Heart right ventricle (tissue), 16 donors: ENCODE measurements at regions of chr3 and their contacts with region 1.

Region 1: GRCh38 chr3:120095226-120095978 is 1.2 kb upstream of the GSK3B start:
- DNase-seq: peak; percentile 88 to 91
- ATAC-seq: peak; percentile 56 to 81 (median 73)
- H3K4me3 ChIP-seq: peak overlapping the region; percentile 74 to 95 (median 86)
- H3K27ac ChIP-seq: peak overlapping the region; percentile 98 to 100 (median 99)
- H3K4me1 ChIP-seq: peaks cover 0 to 31% (median 26%) of the 10 kb centered on the region in 9 donors
- H3K27me3 ChIP-seq: no peaks in the 10 kb centered on the region
- CTCF ChIP-seq: no peak

Region 2: DNA sequence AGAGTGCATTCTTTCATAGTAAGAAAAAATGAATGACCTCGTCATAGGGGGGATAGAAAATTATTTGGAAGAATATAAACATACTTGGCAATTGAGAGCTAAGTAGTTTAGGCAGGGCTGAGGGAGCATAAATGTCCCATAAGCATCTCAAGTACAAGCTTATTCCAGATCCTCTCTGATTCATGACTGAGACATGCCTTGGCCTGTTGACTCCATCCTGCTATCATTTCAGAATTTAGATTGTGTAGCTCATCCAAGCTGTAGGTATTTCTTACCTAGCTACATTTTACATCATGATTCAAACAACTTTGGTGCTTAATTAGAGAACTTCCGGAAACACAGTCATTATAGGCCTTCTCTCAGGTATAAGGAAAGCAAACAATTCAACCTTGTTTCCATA is 614.3 kb before region 1 on chr3:
- intact Hi-C with region 1: no loop called
- DNase-seq: no peak
- ATAC-seq: no peak
- H3K4me3 ChIP-seq: no peak overlapping the region
- H3K27ac ChIP-seq: no peak overlapping the region
- H3K4me1 ChIP-seq: no peaks in the 10 kb centered on the region
- H3K27me3 ChIP-seq: no peaks in the 10 kb centered on the region
- CTCF ChIP-seq: no peak

Region 3: GRCh38 chr3:119669906-119670570 is 425.4 kb before region 1 on chr3:
- intact Hi-C with region 1: no loop called
- DNase-seq: no peak
- ATAC-seq: peak in 1 of 8 donors; percentile 8
- H3K4me3 ChIP-seq: no peak overlapping the region
- H3K27ac ChIP-seq: peak overlapping the region in 9 of 10 donors; percentile 33 to 98 (median 58)
- H3K4me1 ChIP-seq: peaks cover 3 to 57% (median 35%) of the 10 kb centered on the region in 9 donors
- H3K27me3 ChIP-seq: no peaks in the 10 kb centered on the region
- CTCF ChIP-seq: no peak

Region 4: DNA sequence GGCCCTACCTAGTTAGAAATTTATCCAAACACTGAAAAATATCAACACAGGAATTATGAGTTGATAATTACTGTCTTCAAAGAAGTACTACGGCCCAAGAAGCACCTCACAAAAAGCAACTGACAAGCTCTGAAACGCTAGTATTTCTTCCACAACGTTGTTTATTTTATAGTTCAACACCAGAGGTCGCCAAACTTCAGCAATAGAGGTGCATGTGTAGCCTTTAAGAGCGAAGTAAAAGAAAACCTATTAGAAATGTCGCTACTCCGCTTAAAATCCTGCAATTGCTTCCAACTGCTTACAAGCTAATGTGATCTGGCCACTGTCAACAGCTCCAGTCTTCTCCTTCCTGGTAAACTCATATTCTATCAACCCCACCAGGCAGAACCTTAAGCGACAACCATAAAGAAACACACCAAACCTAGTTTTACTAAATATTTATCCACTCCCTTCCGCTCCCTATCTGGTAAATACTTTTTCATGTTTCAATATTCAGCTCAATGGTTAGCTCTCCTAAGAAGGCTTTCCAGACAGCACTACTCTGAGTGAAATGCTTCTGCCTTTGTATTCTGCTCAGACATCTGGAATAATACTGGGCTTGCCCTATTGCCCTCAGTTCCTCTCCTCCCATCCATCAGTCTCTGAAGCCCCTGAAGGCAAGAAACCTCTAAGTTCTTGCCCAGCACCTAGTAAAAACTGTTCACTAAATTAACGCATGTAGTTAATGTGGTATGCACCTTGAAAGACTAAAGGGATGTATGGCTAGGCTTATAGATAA is 203.3 kb before region 1 on chr3:
- intact Hi-C with region 1: loop called in 9 of 10 experiments (anchors 2 to 10 kb)
- DNase-seq: peak in 1 of 2 donors; percentile 60
- ATAC-seq: peak; percentile 61 to 89 (median 84)
- H3K4me3 ChIP-seq: peak overlapping the region in 1 of 10 donors; percentile 6
- H3K27ac ChIP-seq: peak overlapping the region in 1 of 10 donors; percentile 11
- H3K4me1 ChIP-seq: peaks cover 0 to 12% (median 9%) of the 10 kb centered on the region in 9 donors
- H3K27me3 ChIP-seq: no peaks in the 10 kb centered on the region
- CTCF ChIP-seq: peak; percentile 45 to 89 (median 75)

Region 5: GRCh38 chr3:119912220-119912619 is 183.2 kb before region 1 on chr3:
- intact Hi-C with region 1: loop called in 1 of 10 experiments (anchors 5 kb)
- DNase-seq: no peak
- ATAC-seq: no peak
- H3K4me3 ChIP-seq: no peak overlapping the region
- H3K27ac ChIP-seq: no peak overlapping the region
- H3K4me1 ChIP-seq: peaks cover 0 to 34% (median 13%) of the 10 kb centered on the region in 9 donors
- H3K27me3 ChIP-seq: no peaks in the 10 kb centered on the region
- CTCF ChIP-seq: no peak

Region 6: GRCh38 chr3:120013481-120013880 is 81.9 kb before region 1 on chr3:
- intact Hi-C with region 1: loop called in 1 of 10 experiments (anchors 5 kb)
- DNase-seq: no peak
- ATAC-seq: peak in 4 of 8 donors; percentile 38 to 71 (median 61)
- H3K4me3 ChIP-seq: no peak overlapping the region
- H3K27ac ChIP-seq: peak overlapping the region in 6 of 10 donors; percentile 8 to 45 (median 26)
- H3K4me1 ChIP-seq: peaks cover 0 to 76% (median 57%) of the 10 kb centered on the region in 9 donors
- H3K27me3 ChIP-seq: no peaks in the 10 kb centered on the region
- CTCF ChIP-seq: no peak

Region 7: GRCh38 chr3:120057626-120058025 is 37.8 kb before region 1 on chr3:
- intact Hi-C with region 1: loop called in 1 of 10 experiments (anchors 5 kb)
- DNase-seq: no peak
- ATAC-seq: no peak
- H3K4me3 ChIP-seq: no peak overlapping the region
- H3K27ac ChIP-seq: no peak overlapping the region
- H3K4me1 ChIP-seq: peaks cover 3 to 61% (median 36%) of the 10 kb centered on the region in 9 donors
- H3K27me3 ChIP-seq: no peaks in the 10 kb centered on the region
- CTCF ChIP-seq: no peak

Region 8: DNA sequence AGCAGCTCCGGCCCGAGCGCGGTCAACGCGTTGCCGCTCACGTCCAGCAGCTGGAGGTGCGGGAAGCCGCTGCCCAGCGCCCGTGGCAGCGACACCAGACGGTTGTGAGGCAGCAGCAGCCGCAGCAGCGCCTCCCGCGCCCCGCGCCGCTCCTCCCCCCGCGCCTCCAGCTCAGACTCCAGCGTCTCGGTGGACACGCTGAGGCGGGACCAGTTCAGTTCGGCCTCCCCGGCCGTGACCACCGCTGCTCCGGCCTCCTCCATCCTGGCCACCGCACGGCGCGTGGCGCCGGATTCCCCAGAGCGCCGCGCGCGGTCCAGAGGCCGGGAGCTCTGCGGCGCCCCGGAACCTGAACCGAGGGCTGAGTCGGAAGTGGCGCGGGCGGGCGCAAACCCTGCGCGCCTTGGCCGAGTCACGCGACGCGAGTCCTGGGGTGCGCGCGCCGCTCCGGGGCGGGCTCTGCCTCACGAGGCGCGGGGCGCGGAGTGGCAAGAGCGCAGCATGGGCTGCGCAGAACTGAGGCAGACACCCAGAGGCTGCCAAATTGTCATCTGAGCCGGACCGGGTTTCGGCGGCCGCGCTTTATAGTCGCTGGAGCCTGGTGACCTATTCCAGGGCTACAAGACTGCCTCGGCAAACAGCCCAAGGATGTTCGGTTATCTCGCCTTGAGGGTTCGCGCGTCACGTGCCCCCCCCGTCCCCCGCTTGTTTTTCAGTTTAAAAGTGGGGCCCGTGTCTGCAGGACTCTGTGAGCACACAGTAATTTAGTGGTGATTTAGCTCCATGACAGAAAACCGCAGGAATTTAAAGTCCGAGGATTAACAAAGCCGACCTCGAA is 253.8 kb after region 1 on chr3 and contains the start of gene LRRC58:
- intact Hi-C with region 1: loop called in 1 of 10 experiments (anchors 10 kb)
- DNase-seq: peak; percentile 85 to 92
- ATAC-seq: peak; percentile 97 to 99 (median 98)
- H3K4me3 ChIP-seq: peak within 1 kb of the TSS; percentile 54 to 98 (median 89)
- H3K27ac ChIP-seq: peak within 1 kb of the TSS; percentile 53 to 94 (median 89)
- H3K4me1 ChIP-seq: peaks cover 0 to 55% (median 13%) of the 10 kb centered on the region in 9 donors
- H3K27me3 ChIP-seq: no peaks in the 10 kb centered on the region
- CTCF ChIP-seq: peak in 6 of 9 donors; percentile 14 to 61 (median 42)
- total RNA-seq, gene LRRC58: 6.9 to 12.1 (median 9.1) TPM